ENCODE measurements at regions of chr13 and their contacts with region 1.

Region 1: GRCh38 chr13:29935309-29935981 is 85.0 kb upstream of the UBL3 start:
- DNase-seq: no peak
- ATAC-seq: peak in 3 of 4 donors; percentile 25 to 46 (median 31)
- H3K4me3 ChIP-seq: no peak overlapping the region
- H3K27ac ChIP-seq: no peak overlapping the region
- H3K4me1 ChIP-seq: peaks cover 0 to 9% (median 0%) of the 10 kb centered on the region in 4 donors
- H3K27me3 ChIP-seq: no peaks in the 10 kb centered on the region
- CTCF ChIP-seq: no peak
- POLR2A ChIP-seq: no peak

Region 2: GRCh38 chr13:30107581-30107992 is 172.1 kb after region 1 on chr13:
- intact Hi-C with region 1: loop called in 1 of 2 experiments (anchors 10 kb)
- DNase-seq: peak in 1 of 3 donors; percentile 40
- ATAC-seq: peak in 1 of 4 donors; percentile 8
- H3K4me3 ChIP-seq: no peak overlapping the region
- H3K27ac ChIP-seq: no peak overlapping the region
- H3K4me1 ChIP-seq: peaks cover 0 to 11% (median 5%) of the 10 kb centered on the region in 4 donors
- H3K27me3 ChIP-seq: no peaks in the 10 kb centered on the region
- CTCF ChIP-seq: no peak
- POLR2A ChIP-seq: no peak

Measured in right lobe of liver (tissue), 6 donors.